ENCODE measurements at regions of chr2 and their contacts with region 1.

Region 1: GRCh38 chr2:179106676-179107428 is 56.9 kb upstream of the CCDC141 start:
- DNase-seq: peak; percentile 7 to 66 (median 62)
- H3K4me3 ChIP-seq: no peak overlapping the region
- H3K27ac ChIP-seq: no peak overlapping the region
- H3K4me1 ChIP-seq: peaks cover 0 to 6% (median 0%) of the 10 kb centered on the region in 4 experiments
- H3K27me3 ChIP-seq: no peaks in the 10 kb centered on the region

Region 2: GRCh38 chr2:178954049-178954448 is 152.8 kb before region 1 on chr2:
- CTCF ChIA-PET with region 1: no interaction called
- POLR2A ChIA-PET with region 1: no interaction called
- DNase-seq: no peak
- H3K4me3 ChIP-seq: no peak overlapping the region
- H3K27ac ChIP-seq: no peak overlapping the region
- H3K4me1 ChIP-seq: no peaks in the 10 kb centered on the region
- H3K27me3 ChIP-seq: no peaks in the 10 kb centered on the region

Region 3: DNA sequence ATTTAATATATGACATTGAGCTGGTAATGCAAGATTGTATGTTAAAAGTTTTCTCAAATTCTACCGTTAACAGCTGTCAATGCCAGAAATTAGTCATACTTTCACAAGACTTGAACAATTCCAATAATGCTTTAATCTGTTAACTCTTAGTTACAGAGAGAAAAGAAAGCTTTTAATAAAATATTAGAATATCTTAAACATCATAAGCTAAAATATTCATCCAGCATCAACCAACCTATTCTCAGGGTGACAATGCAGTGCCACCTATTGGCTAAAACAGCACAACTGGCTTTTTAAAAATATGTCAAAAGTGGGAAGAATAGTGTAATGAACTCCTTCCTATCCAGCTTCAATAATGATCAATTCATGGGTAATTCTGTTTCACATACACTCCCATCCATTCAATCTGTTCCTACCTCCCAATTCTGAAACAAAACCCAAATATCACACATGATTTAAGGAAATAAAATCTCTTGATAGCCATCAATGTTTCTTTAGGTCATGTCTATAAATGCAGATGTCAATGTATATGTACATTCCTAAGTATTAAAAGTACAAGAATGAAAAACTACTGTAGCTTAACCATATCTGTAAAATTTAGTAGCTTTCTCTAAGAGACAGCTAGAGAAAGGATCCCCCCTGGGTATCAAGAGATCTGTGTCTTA is 22.9 kb after region 1 on chr2:
- CTCF ChIA-PET with region 1: interaction called, 11 read pairs
- POLR2A ChIA-PET with region 1: no interaction called
- DNase-seq: peak; percentile 10 to 26 (median 24)
- H3K4me3 ChIP-seq: no peak overlapping the region
- H3K27ac ChIP-seq: no peak overlapping the region
- H3K4me1 ChIP-seq: no peaks in the 10 kb centered on the region
- H3K27me3 ChIP-seq: no peaks in the 10 kb centered on the region

Region 4: GRCh38 chr2:179140546-179140945 is 33.7 kb after region 1 on chr2:
- CTCF ChIA-PET with region 1: no interaction called
- POLR2A ChIA-PET with region 1: no interaction called
- DNase-seq: no peak
- H3K4me3 ChIP-seq: no peak overlapping the region
- H3K27ac ChIP-seq: no peak overlapping the region
- H3K4me1 ChIP-seq: no peaks in the 10 kb centered on the region
- H3K27me3 ChIP-seq: no peaks in the 10 kb centered on the region